ENCODE measurements at regions of chr2 and their contacts with region 1.

Region 1: DNA sequence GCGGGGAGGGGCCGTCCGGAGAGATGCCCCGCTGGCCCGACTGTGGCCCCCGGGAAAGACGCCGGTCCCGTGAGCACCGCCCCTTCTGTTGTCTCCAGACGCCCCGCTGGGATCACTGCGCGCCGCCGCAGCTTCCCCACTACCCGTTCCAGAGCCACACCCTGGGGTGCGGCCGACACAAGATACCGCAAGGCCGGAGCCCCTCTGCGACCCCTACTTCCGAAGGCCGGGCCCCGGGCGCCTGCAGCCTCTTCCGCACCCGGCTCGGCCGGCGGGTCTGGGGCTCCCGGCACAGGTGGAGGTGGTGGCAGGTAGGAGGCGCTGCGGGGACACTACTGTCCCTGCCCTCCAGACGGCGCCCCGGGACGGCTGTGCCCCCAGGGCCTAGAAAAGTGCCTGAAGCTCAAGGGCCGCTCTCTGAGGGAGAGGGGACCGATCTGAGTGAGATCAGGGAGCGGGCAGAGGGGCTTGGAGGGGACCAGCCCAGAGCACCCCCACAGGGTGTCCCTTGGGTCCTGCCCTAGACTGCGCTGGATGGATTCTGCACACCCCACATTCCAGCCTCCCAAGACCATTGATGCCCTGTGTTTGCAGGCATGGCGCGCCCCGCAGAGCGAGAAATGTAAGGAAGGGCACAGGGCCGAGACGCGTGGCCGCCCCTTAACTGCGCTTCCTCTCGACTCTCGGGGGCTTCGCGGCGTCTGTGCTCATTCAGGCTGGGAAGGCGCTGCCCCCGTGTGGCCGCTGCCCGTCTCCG is 80.0 kb downstream of the GFPT1 start:
- DNase-seq: peak in 41 of 42 donors; percentile 49 to 85 (median 74)

Region 2: GRCh38 chr2:68849579-68850030 is 457.4 kb before region 1 on chr2:
- intact Hi-C with region 1: no loop called
- DNase-seq: no peak

Region 3: DNA sequence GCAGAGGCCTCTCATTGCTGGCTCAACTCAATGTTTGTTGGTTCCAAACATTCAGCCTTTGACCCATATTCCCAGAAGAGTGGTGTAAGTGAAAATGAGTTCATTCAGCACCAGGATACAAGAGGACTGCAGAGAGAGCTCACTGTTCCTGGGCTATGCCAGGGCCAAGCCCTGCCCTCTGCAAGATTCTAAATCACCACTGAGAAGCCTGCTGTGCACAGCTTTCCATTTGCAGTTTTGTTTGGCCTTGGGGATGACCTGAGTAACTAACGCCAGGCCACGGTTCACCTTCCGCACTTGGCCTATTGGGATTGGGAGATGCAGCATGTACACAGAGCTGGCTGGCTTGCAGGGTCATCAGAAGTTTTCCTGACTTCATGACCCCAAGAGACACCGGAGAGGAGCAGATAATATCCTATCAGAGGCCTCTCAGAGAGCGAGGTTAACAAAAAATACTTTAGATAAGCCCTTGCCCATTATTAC is 319.9 kb before region 1 on chr2:
- intact Hi-C with region 1: no loop called
- DNase-seq: peak in 12 of 42 donors; percentile 2 to 65 (median 11)

Region 4: DNA sequence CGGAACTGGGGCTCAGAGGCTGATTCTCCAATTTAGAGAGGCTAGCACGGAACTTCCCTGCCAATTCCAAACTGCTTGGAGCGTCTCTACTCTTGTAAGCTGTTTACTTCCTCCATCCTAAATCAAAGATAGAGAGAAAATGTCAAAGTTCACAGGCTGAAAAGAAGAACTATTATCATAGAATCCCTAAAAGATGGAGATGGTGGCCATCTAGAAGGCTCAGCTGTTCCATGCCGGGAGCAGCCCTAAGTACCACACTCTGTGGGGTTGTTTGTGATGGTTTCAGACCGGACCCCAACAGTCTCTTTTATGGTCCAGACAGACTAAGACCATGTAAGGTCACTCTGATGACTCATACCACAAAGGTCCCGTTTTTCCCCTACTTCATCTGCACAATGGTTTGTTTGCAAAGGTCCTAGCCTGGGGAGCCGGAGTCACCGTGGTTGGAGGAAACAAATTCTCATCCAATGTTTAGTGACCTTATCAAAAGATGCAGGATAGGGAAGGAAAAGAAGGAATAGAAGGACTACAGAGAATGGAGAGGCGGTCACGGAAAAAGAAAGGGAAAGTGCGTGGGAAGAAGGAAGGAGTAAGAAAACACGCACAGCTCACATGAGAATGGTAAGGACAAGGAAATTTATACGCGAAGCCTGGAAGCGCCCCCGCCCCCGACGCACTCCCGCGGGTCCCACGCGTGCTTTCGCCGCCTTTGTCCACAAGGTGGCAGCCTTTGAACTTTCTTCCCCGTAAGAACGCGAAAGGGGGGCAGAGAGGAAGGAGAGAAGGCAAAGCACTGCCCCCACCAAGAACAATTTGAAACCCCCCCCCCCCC is 294.5 kb before region 1 on chr2:
- intact Hi-C with region 1: loop called (anchors 10 kb)
- DNase-seq: peak; percentile 56 to 90 (median 78)

Region 5: GRCh38 chr2:69741619-69742466 is 434.8 kb after region 1 on chr2 and contains the start of gene ANXA4:
- intact Hi-C with region 1: no loop called
- DNase-seq: peak; percentile 28 to 76 (median 57)

Measured in head of caudate nucleus (tissue), 42 donors.